GM12878 (cell line): ENCODE measurements at regions of chr4 and their contacts with region 1.

Region 1: GRCh38 chr4:98352396-98352795 is 91.2 kb downstream of the RAP1GDS1 start:
- DNase-seq: no peak
- ATAC-seq: no peak
- H3K4me3 ChIP-seq: no peak overlapping the region
- H3K27ac ChIP-seq: no peak overlapping the region
- H3K4me1 ChIP-seq: no peaks in the 10 kb centered on the region
- H3K27me3 ChIP-seq: no peaks in the 10 kb centered on the region
- CTCF ChIP-seq: no peak
- EP300 ChIP-seq: no peak
- POLR2A ChIP-seq: no peak
- RAD21 ChIP-seq: no peak

Region 2: DNA sequence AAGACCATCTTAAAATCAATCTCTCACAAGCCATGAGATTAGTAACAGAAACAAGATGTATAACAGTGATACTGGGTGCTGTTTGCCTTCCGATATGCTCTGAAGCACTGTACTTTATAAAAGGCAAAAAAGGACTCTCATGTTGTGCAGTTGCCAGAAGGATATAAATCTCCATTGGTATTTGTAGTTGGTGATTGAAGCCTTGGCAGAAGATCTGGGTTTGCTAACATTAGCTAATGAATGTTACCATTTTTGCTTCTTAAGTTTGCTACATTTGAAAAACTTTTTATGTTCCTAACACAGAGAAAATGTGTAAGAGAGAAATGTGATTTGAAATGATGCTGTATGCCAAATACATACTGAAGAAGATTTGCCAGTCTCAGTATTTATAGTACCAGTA is 46.8 kb before region 1 on chr4:
- CTCF ChIA-PET with region 1: no interaction called
- POLR2A ChIA-PET with region 1: no interaction called
- RAD21 ChIA-PET with region 1: no interaction called
- SMC1A ChIA-PET with region 1: no interaction called
- in situ Hi-C with region 1: no loop called
- intact Hi-C with region 1: loop called (anchors 5 kb)
- DNase-seq: no peak
- ATAC-seq: no peak
- H3K4me3 ChIP-seq: no peak overlapping the region
- H3K27ac ChIP-seq: no peak overlapping the region
- H3K4me1 ChIP-seq: no peaks in the 10 kb centered on the region
- H3K27me3 ChIP-seq: no peaks in the 10 kb centered on the region
- CTCF ChIP-seq: no peak
- EP300 ChIP-seq: no peak
- POLR2A ChIP-seq: no peak
- RAD21 ChIP-seq: no peak